ENCODE measurements at regions of chr10 and their contacts with region 1.

Region 1: GRCh38 chr10:122374237-122374869 is at the start of gene PLEKHA1:
- DNase-seq: peak; percentile 90
- ATAC-seq: peak; percentile 89
- H3K4me3 Mint-ChIP-seq: peak within 1 kb of the TSS; percentile 93
- H3K27ac Mint-ChIP-seq: peak within 1 kb of the TSS; percentile 95
- H3K4me1 Mint-ChIP-seq: peaks cover 30% of the 10 kb centered on the region
- H3K27me3 Mint-ChIP-seq: peaks cover 23% of the 10 kb centered on the region
- CTCF ChIP-seq: no peak
- total RNA-seq, gene PLEKHA1: 11.8 and 12.8 TPM in 2 replicates

Region 2: GRCh38 chr10:121668314-121669027 is 705.9 kb before region 1 on chr10:
- CTCF ChIA-PET with region 1: no interaction called
- POLR2A ChIA-PET with region 1: no interaction called
- intact Hi-C with region 1: no loop called
- DNase-seq: no peak
- ATAC-seq: no peak
- H3K4me3 Mint-ChIP-seq: no peak overlapping the region
- H3K27ac Mint-ChIP-seq: no peak overlapping the region
- H3K4me1 Mint-ChIP-seq: no peaks in the 10 kb centered on the region
- H3K27me3 Mint-ChIP-seq: peaks cover 6% of the 10 kb centered on the region
- CTCF ChIP-seq: no peak

Region 3: GRCh38 chr10:121927841-121928527 is 446.4 kb before region 1 on chr10 and contains the start of gene ATE1:
- CTCF ChIA-PET with region 1: no interaction called
- POLR2A ChIA-PET with region 1: interaction called, 3 read pairs
- intact Hi-C with region 1: loop called (anchors 1 kb)
- DNase-seq: peak; percentile 79
- ATAC-seq: peak; percentile 91
- H3K4me3 Mint-ChIP-seq: peak within 1 kb of the TSS; percentile 94
- H3K27ac Mint-ChIP-seq: peak within 1 kb of the TSS; percentile 91
- H3K4me1 Mint-ChIP-seq: peaks cover 19% of the 10 kb centered on the region
- H3K27me3 Mint-ChIP-seq: no peaks in the 10 kb centered on the region
- CTCF ChIP-seq: no peak
- total RNA-seq, gene ATE1: 26.0 and 31.0 TPM in 2 replicates

Region 4: DNA sequence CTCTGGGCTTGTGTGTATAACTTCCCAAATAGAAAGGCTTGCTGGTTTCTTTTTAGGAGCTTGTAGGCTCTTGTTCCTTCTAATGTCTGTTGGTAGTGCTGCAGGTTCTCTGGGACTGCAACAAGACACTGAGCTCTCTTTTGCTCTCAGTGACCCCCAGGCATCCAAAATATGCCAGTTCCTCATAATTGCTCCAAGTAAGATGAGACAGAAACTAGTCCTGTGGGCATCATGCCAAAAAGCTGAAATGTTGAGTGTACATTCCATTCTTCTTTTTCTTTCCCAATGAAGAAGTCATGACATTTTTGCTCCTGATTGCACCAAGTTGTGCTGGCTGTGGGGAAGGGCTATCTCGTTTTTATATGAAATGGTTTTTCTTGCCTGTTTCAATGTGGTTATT is 110.4 kb before region 1 on chr10:
- CTCF ChIA-PET with region 1: no interaction called
- POLR2A ChIA-PET with region 1: no interaction called
- intact Hi-C with region 1: no loop called
- DNase-seq: no peak
- ATAC-seq: no peak
- H3K4me3 Mint-ChIP-seq: no peak overlapping the region
- H3K27ac Mint-ChIP-seq: no peak overlapping the region
- H3K4me1 Mint-ChIP-seq: no peaks in the 10 kb centered on the region
- H3K27me3 Mint-ChIP-seq: peaks cover 20% of the 10 kb centered on the region
- CTCF ChIP-seq: no peak

Region 5: GRCh38 chr10:122307669-122308486 is 66.5 kb before region 1 on chr10:
- CTCF ChIA-PET with region 1: no interaction called
- POLR2A ChIA-PET with region 1: no interaction called
- intact Hi-C with region 1: loop called (anchors 2 kb)
- DNase-seq: no peak
- ATAC-seq: peak; percentile 50
- H3K4me3 Mint-ChIP-seq: no peak overlapping the region
- H3K27ac Mint-ChIP-seq: no peak overlapping the region
- H3K4me1 Mint-ChIP-seq: peaks cover 26% of the 10 kb centered on the region
- H3K27me3 Mint-ChIP-seq: peaks cover 9% of the 10 kb centered on the region
- CTCF ChIP-seq: no peak

Region 6: GRCh38 chr10:122391875-122392274 is 17.5 kb after region 1 on chr10:
- CTCF ChIA-PET with region 1: interaction called, 3 read pairs
- POLR2A ChIA-PET with region 1: interaction called, 8 read pairs
- intact Hi-C with region 1: loop called (anchors 2 kb)
- DNase-seq: no peak
- ATAC-seq: no peak
- H3K4me3 Mint-ChIP-seq: no peak overlapping the region
- H3K27ac Mint-ChIP-seq: no peak overlapping the region
- H3K4me1 Mint-ChIP-seq: peaks cover 33% of the 10 kb centered on the region
- H3K27me3 Mint-ChIP-seq: no peaks in the 10 kb centered on the region
- CTCF ChIP-seq: no peak

Region 7: DNA sequence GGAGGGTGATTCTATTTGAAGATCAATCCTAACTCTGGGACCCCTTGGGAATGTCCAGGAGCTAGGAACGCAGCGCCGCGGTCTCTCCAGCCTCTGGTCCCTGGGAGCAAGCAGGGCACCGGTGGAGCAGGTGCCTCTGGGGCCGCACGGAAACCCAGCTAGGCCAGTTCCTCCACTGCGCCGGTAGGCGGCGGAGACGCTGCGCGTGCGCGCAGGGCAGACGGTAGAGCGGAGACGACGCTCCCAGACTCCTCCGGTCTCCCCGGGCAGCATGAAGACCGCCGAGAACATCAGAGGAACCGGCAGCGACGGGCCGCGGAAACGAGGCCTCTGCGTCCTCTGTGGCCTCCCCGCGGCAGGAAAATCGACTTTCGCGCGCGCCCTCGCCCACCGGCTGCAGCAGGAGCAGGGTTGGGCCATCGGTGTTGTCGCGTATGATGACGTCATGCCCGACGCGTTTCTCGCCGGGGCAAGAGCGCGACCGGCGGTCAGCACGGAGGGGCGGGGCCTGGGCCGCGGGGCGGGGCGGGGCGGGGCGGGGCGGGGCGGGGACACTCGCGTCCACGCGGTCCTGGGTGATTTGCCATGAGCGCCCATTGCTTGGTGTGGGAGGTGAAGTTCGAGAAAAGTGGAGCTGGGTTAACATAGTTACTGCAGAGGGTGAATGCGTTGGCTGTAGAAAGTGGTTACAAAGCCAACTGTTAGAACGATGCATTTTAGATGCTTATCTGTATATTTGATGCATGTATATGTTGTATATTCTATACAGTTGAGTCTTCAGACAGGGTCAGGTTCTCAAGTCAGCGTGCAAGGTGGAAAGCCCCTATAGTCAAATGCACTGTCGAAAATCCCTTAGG is 606.1 kb after region 1 on chr10 and contains the start of gene PSTK:
- CTCF ChIA-PET with region 1: no interaction called
- POLR2A ChIA-PET with region 1: no interaction called
- intact Hi-C with region 1: loop called (anchors 1 kb)
- DNase-seq: peak; percentile 84
- ATAC-seq: peak; percentile 96
- H3K4me3 Mint-ChIP-seq: peak within 1 kb of the TSS; percentile 93
- H3K27ac Mint-ChIP-seq: peak within 1 kb of the TSS; percentile 96
- H3K4me1 Mint-ChIP-seq: peaks cover 18% of the 10 kb centered on the region
- H3K27me3 Mint-ChIP-seq: peaks cover 7% of the 10 kb centered on the region
- CTCF ChIP-seq: no peak
- total RNA-seq, gene PSTK: 3.9 and 5.3 TPM in 2 replicates

Region 8: GRCh38 chr10:123348691-123349572 is 974.6 kb after region 1 on chr10:
- CTCF ChIA-PET with region 1: no interaction called
- POLR2A ChIA-PET with region 1: no interaction called
- intact Hi-C with region 1: no loop called
- DNase-seq: no peak
- ATAC-seq: no peak
- H3K4me3 Mint-ChIP-seq: no peak overlapping the region
- H3K27ac Mint-ChIP-seq: no peak overlapping the region
- H3K4me1 Mint-ChIP-seq: no peaks in the 10 kb centered on the region
- H3K27me3 Mint-ChIP-seq: peaks cover 7% of the 10 kb centered on the region
- CTCF ChIP-seq: no peak